A673 (cell line): ENCODE measurements at regions of chr4 and their contacts with region 1.

Region 1: DNA sequence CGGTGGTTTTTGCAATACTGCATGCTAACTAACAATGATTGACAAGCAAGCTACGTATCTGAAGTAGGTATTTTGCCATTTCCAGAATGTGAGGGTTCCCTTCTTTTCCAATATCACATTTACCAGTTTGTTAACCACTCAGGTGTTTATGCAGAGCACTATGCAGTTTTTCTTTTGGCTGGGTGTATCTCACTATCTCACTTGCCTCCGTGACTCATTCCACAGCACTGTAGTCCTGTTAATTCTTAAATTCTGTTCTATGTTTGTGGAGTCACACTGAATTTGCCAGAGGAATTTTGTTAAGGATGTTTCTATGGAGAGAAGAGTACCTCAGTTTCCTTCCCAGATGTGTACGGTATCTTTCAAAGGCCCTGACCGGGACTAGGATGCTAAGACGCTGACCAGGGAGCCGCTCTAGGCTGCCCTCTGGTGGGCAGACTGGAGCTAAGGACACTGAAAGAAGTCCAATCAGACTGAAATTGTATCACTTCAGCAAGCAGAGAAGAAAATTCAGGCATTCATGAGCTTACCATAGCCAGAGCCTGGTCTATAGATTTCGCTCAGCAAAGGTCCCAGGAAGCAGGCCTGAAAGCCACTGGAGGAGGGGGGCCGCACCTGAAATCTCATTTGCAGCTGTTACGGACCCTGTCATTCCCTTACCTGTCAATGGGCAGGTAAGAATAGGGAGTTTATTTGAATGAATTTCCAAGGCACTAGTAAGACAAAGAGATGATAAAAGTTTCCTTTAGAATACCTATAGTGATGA is 388.4 kb upstream of the SPOCK3 start:
- DNase-seq: peak; percentile 68
- H3K4me3 ChIP-seq: no peak overlapping the region
- H3K27ac ChIP-seq: no peak overlapping the region
- H3K4me1 ChIP-seq: no peaks in the 10 kb centered on the region
- H3K27me3 ChIP-seq: no peaks in the 10 kb centered on the region
- CTCF ChIP-seq: peak; percentile 86

Region 2: GRCh38 chr4:166165829-166166420 is 1456.7 kb before region 1 on chr4:
- CTCF ChIA-PET with region 1: no interaction called
- POLR2A ChIA-PET with region 1: no interaction called
- intact Hi-C with region 1: loop called (anchors 5 kb)
- DNase-seq: peak; percentile 87
- H3K4me3 ChIP-seq: no peak overlapping the region
- H3K27ac ChIP-seq: no peak overlapping the region
- H3K4me1 ChIP-seq: no peaks in the 10 kb centered on the region
- H3K27me3 ChIP-seq: no peaks in the 10 kb centered on the region
- CTCF ChIP-seq: peak; percentile 74

Region 3: GRCh38 chr4:167443841-167444240 is 178.8 kb before region 1 on chr4:
- CTCF ChIA-PET with region 1: no interaction called
- POLR2A ChIA-PET with region 1: no interaction called
- intact Hi-C with region 1: loop called (anchors 10 kb)
- DNase-seq: no peak
- H3K4me3 ChIP-seq: no peak overlapping the region
- H3K27ac ChIP-seq: no peak overlapping the region
- H3K4me1 ChIP-seq: no peaks in the 10 kb centered on the region
- H3K27me3 ChIP-seq: no peaks in the 10 kb centered on the region
- CTCF ChIP-seq: no peak

Region 4: GRCh38 chr4:168076989-168077725 is 454.5 kb after region 1 on chr4:
- CTCF ChIA-PET with region 1: no interaction called
- POLR2A ChIA-PET with region 1: no interaction called
- intact Hi-C with region 1: loop called (anchors 2 kb)
- DNase-seq: peak; percentile 71
- H3K4me3 ChIP-seq: no peak overlapping the region
- H3K27ac ChIP-seq: no peak overlapping the region
- H3K4me1 ChIP-seq: no peaks in the 10 kb centered on the region
- H3K27me3 ChIP-seq: peaks cover 7% of the 10 kb centered on the region
- CTCF ChIP-seq: peak; percentile 93

Region 5: DNA sequence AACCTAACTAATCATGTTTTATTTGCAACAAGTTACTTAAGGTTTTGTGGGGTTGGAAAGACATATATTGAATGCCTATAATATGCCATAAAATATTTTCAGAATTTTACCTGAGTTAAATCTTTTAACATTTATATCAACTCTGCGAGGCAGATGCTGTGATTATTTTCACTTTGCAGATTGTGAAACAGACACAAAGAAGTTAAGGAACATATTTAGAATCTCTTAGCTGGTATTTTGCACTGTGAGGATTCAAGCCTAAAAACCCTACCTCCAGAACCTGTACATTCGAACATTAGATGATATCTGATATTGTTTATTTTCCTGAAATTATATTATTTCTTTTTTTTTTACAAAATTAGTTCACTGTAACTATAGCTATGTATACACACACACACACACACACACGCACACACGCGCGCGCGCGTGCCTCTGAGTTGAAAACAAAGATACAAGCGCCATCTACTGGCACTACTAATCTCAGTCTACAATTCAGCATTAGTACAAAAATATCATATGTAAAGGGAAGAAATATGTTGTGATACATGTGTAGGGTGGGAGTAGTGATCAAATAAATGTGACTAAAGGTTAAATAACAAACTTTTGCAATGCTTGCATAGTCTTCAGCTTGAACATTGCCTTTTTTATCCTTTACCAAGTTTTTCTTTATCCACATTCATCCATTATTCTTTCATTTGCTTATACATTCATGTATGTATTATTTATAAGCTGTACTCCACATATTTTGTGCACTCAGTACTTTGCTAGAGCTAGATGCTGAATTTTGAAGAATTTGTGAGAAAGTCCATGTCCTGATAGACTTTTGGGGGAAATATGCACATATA is 531.2 kb after region 1 on chr4:
- CTCF ChIA-PET with region 1: interaction called, 3 read pairs
- POLR2A ChIA-PET with region 1: no interaction called
- intact Hi-C with region 1: loop called (anchors 10 kb)
- DNase-seq: peak; percentile 81
- H3K4me3 ChIP-seq: peak overlapping the region; percentile 20
- H3K27ac ChIP-seq: no peak overlapping the region
- H3K4me1 ChIP-seq: no peaks in the 10 kb centered on the region
- H3K27me3 ChIP-seq: no peaks in the 10 kb centered on the region
- CTCF ChIP-seq: peak; percentile 91